ENCODE measurements at regions of chr1 and their contacts with region 1.

Region 1: DNA sequence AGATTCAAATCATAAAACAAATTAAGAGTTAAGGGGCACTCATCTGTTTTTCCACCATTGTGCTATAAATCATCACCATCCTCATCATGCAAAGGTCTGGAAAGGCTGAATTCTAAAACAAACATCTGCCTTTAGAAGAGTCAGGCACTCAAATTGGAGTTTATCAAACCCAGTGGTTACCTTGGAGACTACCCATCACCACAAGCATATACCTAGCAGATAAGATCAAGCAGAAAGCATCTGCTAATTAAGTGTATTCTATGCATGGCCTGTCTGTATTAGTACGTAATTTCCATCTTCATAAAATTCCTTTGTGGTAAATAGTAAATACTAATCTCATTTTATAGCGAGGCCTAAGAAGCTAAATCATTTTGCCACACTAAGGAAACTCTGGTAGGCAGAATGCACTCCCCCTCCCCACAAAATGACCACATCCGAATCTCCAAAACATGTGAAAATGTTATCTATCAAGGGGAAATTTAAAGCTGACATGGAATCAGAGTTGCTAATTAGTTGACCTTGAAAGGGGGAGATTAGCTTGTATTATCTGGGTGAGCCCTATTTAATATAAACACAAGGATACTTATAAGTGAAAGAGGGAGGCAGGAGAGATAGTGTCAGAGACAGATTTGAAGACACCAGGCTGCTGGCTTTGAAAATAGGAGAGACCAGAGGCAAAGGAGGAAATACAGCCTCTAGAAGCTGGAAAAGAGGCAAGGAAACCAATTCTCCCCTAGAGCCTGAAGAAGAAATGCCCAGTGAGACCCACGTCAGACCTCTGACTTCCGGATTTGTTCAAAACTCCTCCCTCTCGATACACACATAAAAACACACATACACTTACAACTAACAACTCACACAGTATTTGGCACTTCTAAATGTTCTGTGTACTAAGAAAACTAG is 23.2 kb downstream of the ARID4B start:
- DNase-seq: peak; percentile 65 to 82 (median 78)
- H3K4me3 ChIP-seq: peak overlapping the region in 1 of 2 donors; percentile 24
- H3K4me3 Mint-ChIP-seq: peak overlapping the region; percentile 63 to 85 (median 77)
- H3K27ac ChIP-seq: peak overlapping the region; percentile 78
- H3K27ac Mint-ChIP-seq: peak overlapping the region; percentile 91 to 98 (median 95)
- H3K4me1 ChIP-seq: peaks cover 84% of the 10 kb centered on the region
- H3K4me1 Mint-ChIP-seq: peaks cover 34 to 76% (median 53%) of the 10 kb centered on the region in 4 donors
- H3K27me3 ChIP-seq: no peaks in the 10 kb centered on the region
- H3K27me3 Mint-ChIP-seq: no peaks in the 10 kb centered on the region

Region 2: DNA sequence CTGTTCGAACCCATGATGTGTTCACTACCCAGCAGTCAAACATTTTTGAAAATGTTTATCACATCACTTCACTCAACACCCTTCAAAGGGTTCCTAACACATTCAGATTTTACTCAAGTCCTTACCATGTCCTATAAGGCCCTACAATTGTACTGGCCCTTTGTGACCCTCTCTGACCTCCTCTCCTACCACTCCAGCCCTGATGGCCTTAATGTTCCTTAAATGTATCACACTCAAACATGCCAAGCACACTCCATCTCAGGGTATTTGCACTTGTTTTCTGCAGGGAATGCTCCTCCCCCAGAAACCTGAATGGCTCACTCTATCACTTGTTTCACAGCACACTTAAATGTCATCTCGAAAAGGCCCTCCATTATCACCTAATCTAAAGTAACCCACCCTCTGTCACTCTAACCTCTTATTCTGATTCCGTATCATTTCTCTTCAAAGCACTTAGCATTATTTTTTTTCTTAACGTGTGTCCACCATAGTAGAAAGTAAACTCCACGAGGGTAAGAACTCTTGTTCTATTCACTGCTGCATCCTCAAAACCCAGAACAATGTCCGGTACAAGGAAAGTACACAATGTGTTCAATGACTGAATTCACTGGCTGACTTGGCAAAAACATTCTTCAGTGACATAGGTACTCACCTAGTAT is 15.8 kb after region 1 on chr1:
- CTCF ChIA-PET with region 1: interaction called, 3 read pairs
- POLR2A ChIA-PET with region 1: interaction called, 6 read pairs
- intact Hi-C with region 1: loop called (anchors 2 kb)
- DNase-seq: no peak
- H3K4me3 ChIP-seq: no peak overlapping the region
- H3K4me3 Mint-ChIP-seq: peak overlapping the region in 7 of 8 donors; percentile 4 to 63 (median 33)
- H3K27ac ChIP-seq: no peak overlapping the region
- H3K27ac Mint-ChIP-seq: peak overlapping the region; percentile 7 to 87 (median 69)
- H3K4me1 ChIP-seq: peaks cover 95% of the 10 kb centered on the region
- H3K4me1 Mint-ChIP-seq: peaks cover 55 to 79% (median 69%) of the 10 kb centered on the region in 4 donors
- H3K27me3 ChIP-seq: no peaks in the 10 kb centered on the region
- H3K27me3 Mint-ChIP-seq: no peaks in the 10 kb centered on the region

Region 3: GRCh38 chr1:235745503-235746136 is 440.8 kb after region 1 on chr1:
- CTCF ChIA-PET with region 1: no interaction called
- POLR2A ChIA-PET with region 1: no interaction called
- intact Hi-C with region 1: no loop called
- DNase-seq: no peak
- H3K4me3 ChIP-seq: no peak overlapping the region
- H3K4me3 Mint-ChIP-seq: no peak overlapping the region
- H3K27ac ChIP-seq: no peak overlapping the region
- H3K27ac Mint-ChIP-seq: no peak overlapping the region
- H3K4me1 ChIP-seq: no peaks in the 10 kb centered on the region
- H3K4me1 Mint-ChIP-seq: peaks cover 0 to 2% (median 0%) of the 10 kb centered on the region in 4 donors
- H3K27me3 ChIP-seq: no peaks in the 10 kb centered on the region
- H3K27me3 Mint-ChIP-seq: no peaks in the 10 kb centered on the region

Measured in CD4-positive, alpha-beta memory T cell (primary cell).